ENCODE measurements at regions of chr15 and their contacts with region 1.

Region 1: DNA sequence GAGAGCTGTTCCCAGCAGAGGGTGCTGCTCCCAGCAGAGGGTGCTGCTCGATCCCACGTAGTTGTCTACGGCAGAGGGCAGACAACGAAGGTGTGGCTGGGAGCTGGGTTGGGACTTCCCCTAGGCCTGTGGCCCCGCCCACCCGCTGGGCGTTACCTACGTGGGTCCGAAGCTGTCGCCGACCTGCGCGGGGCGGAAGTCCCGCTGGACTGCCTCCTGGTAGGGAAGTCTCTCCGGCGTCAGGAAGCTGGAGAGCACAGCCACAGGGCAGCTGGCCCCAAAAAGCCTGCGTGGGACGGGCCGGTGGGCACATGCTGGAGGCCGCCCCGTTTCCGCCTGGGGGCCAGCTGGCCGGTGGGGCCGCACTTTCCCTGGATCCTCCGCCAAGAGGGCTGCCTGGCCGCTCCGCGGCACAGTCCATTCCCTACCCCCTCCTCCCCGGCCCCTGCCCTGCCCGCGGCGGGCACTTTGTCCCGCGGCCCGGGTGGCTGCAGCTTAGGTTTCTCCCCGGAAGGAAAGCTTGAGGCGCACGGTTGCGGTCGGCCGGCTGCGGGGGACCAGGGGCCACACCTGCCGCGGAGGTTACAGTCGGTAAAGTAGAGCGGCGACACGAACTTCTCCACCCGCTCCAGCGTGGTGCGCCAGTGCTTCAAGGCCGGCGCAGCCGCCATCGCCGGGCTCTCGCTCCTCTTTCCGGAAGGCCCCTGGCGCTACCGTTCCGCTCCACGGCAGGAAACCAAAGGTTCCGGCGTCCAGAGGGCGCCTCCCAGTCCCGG is at the start of gene MAN2C1:
- DNase-seq: peak; percentile 76 to 97 (median 91)
- ATAC-seq: peak; percentile 97
- H3K4me3 ChIP-seq: peak within 1 kb of the TSS; percentile 86 to 97
- H3K4me3 Mint-ChIP-seq: peak within 1 kb of the TSS; percentile 91
- H3K27ac ChIP-seq: peak within 1 kb of the TSS; percentile 89 to 96
- H3K27ac Mint-ChIP-seq: peak within 1 kb of the TSS; percentile 94
- H3K4me1 ChIP-seq: peaks cover 15% of the 10 kb centered on the region
- H3K4me1 Mint-ChIP-seq: peaks cover 24% of the 10 kb centered on the region
- H3K27me3 ChIP-seq: no peaks in the 10 kb centered on the region
- H3K27me3 Mint-ChIP-seq: no peaks in the 10 kb centered on the region
- CTCF ChIP-seq: no peak
- total RNA-seq, gene MAN2C1: 342 to 373 TPM

Region 2: GRCh38 chr15:73394782-73395181 is 1973.3 kb before region 1 on chr15:
- CTCF ChIA-PET with region 1: no interaction called
- POLR2A ChIA-PET with region 1: no interaction called
- intact Hi-C with region 1: no loop called
- DNase-seq: no peak
- ATAC-seq: no peak
- H3K4me3 ChIP-seq: no peak overlapping the region
- H3K4me3 Mint-ChIP-seq: no peak overlapping the region
- H3K27ac ChIP-seq: no peak overlapping the region
- H3K27ac Mint-ChIP-seq: no peak overlapping the region
- H3K4me1 ChIP-seq: no peaks in the 10 kb centered on the region
- H3K4me1 Mint-ChIP-seq: no peaks in the 10 kb centered on the region
- H3K27me3 ChIP-seq: no peaks in the 10 kb centered on the region
- H3K27me3 Mint-ChIP-seq: peaks cover 27% of the 10 kb centered on the region
- CTCF ChIP-seq: no peak

Region 3: GRCh38 chr15:75023181-75023871 is 344.8 kb before region 1 on chr15 and contains the start of gene PPCDC:
- CTCF ChIA-PET with region 1: no interaction called
- POLR2A ChIA-PET with region 1: interaction called, 5 read pairs
- intact Hi-C with region 1: loop called in 1 of 2 experiments (anchors 5 kb)
- DNase-seq: peak; percentile 81 to 96 (median 93)
- ATAC-seq: peak; percentile 100
- H3K4me3 ChIP-seq: peak within 1 kb of the TSS; percentile 82 to 93
- H3K4me3 Mint-ChIP-seq: peak within 1 kb of the TSS; percentile 92
- H3K27ac ChIP-seq: peak within 1 kb of the TSS; percentile 76 to 77
- H3K27ac Mint-ChIP-seq: peak within 1 kb of the TSS; percentile 92
- H3K4me1 ChIP-seq: peaks cover 8% of the 10 kb centered on the region
- H3K4me1 Mint-ChIP-seq: peaks cover 14% of the 10 kb centered on the region
- H3K27me3 ChIP-seq: no peaks in the 10 kb centered on the region
- H3K27me3 Mint-ChIP-seq: no peaks in the 10 kb centered on the region
- CTCF ChIP-seq: no peak
- total RNA-seq, gene PPCDC: 6.0 to 6.5 TPM

Region 4: GRCh38 chr15:75347222-75347878 is 20.8 kb before region 1 on chr15:
- CTCF ChIA-PET with region 1: interaction called, 8 read pairs
- POLR2A ChIA-PET with region 1: interaction called, 30 read pairs
- intact Hi-C with region 1: loop called (anchors 1 kb)
- DNase-seq: peak; percentile 28 to 80 (median 56)
- ATAC-seq: peak; percentile 57
- H3K4me3 ChIP-seq: peak overlapping the region; percentile 62 to 75
- H3K4me3 Mint-ChIP-seq: peak overlapping the region; percentile 87
- H3K27ac ChIP-seq: peak overlapping the region; percentile 28 to 54
- H3K27ac Mint-ChIP-seq: peak overlapping the region; percentile 86
- H3K4me1 ChIP-seq: peaks cover 41% of the 10 kb centered on the region
- H3K4me1 Mint-ChIP-seq: peaks cover 37% of the 10 kb centered on the region
- H3K27me3 ChIP-seq: no peaks in the 10 kb centered on the region
- H3K27me3 Mint-ChIP-seq: no peaks in the 10 kb centered on the region
- CTCF ChIP-seq: no peak

Region 5: GRCh38 chr15:75389791-75390382 is 21.8 kb after region 1 on chr15:
- CTCF ChIA-PET with region 1: interaction called, 4 read pairs
- POLR2A ChIA-PET with region 1: interaction called, 12 read pairs
- intact Hi-C with region 1: no loop called
- DNase-seq: no peak
- ATAC-seq: no peak
- H3K4me3 ChIP-seq: no peak overlapping the region
- H3K4me3 Mint-ChIP-seq: no peak overlapping the region
- H3K27ac ChIP-seq: no peak overlapping the region
- H3K27ac Mint-ChIP-seq: no peak overlapping the region
- H3K4me1 ChIP-seq: no peaks in the 10 kb centered on the region
- H3K4me1 Mint-ChIP-seq: peaks cover 14% of the 10 kb centered on the region
- H3K27me3 ChIP-seq: no peaks in the 10 kb centered on the region
- H3K27me3 Mint-ChIP-seq: no peaks in the 10 kb centered on the region
- CTCF ChIP-seq: no peak

Region 6: GRCh38 chr15:75639709-75640482 is 271.8 kb after region 1 on chr15 and contains the start of gene IMP3:
- CTCF ChIA-PET with region 1: interaction called, 22 read pairs
- POLR2A ChIA-PET with region 1: interaction called, 70 read pairs
- intact Hi-C with region 1: loop called (anchors 1 kb)
- DNase-seq: peak; percentile 81 to 98 (median 94)
- ATAC-seq: peak; percentile 90
- H3K4me3 ChIP-seq: peak within 1 kb of the TSS; percentile 80 to 99
- H3K4me3 Mint-ChIP-seq: peak within 1 kb of the TSS; percentile 91
- H3K27ac ChIP-seq: peak within 1 kb of the TSS; percentile 79 to 98
- H3K27ac Mint-ChIP-seq: peak within 1 kb of the TSS; percentile 97
- H3K4me1 ChIP-seq: peaks cover 31% of the 10 kb centered on the region
- H3K4me1 Mint-ChIP-seq: peaks cover 41% of the 10 kb centered on the region
- H3K27me3 ChIP-seq: no peaks in the 10 kb centered on the region
- H3K27me3 Mint-ChIP-seq: no peaks in the 10 kb centered on the region
- CTCF ChIP-seq: no peak
- total RNA-seq, gene IMP3: 67.1 to 69.5 TPM

Region 7: GRCh38 chr15:75661091-75661777 is 293.1 kb after region 1 on chr15:
- CTCF ChIA-PET with region 1: no interaction called
- POLR2A ChIA-PET with region 1: no interaction called
- intact Hi-C with region 1: no loop called
- DNase-seq: no peak
- ATAC-seq: no peak
- H3K4me3 ChIP-seq: no peak overlapping the region
- H3K4me3 Mint-ChIP-seq: no peak overlapping the region
- H3K27ac ChIP-seq: no peak overlapping the region
- H3K27ac Mint-ChIP-seq: no peak overlapping the region
- H3K4me1 ChIP-seq: no peaks in the 10 kb centered on the region
- H3K4me1 Mint-ChIP-seq: no peaks in the 10 kb centered on the region
- H3K27me3 ChIP-seq: no peaks in the 10 kb centered on the region
- H3K27me3 Mint-ChIP-seq: no peaks in the 10 kb centered on the region
- CTCF ChIP-seq: no peak

Region 8: DNA sequence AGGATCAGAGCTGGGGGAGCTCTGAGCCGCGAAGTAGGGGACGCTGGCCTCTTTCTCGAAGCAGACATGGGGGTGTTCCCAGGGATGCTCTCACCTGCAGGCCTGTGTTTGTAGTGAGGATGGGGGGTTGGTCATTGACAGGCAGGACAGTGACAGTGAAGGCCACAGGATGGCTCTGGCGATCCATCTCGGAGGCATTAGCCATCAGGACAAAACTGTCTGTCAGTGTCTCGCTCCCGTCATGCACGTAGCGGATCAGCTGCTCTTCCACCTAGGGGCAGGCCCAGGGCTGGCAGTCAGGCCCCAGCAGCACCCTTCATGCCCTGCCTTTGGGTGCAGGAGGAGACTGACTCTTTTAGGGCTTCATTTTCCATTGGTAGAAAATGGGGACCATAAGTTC is 316.5 kb after region 1 on chr15:
- CTCF ChIA-PET with region 1: interaction called, 8 read pairs
- POLR2A ChIA-PET with region 1: no interaction called
- intact Hi-C with region 1: loop called in 1 of 2 experiments (anchors 1 kb)
- DNase-seq: no peak
- ATAC-seq: no peak
- H3K4me3 ChIP-seq: no peak overlapping the region
- H3K4me3 Mint-ChIP-seq: no peak overlapping the region
- H3K27ac ChIP-seq: no peak overlapping the region
- H3K27ac Mint-ChIP-seq: no peak overlapping the region
- H3K4me1 ChIP-seq: no peaks in the 10 kb centered on the region
- H3K4me1 Mint-ChIP-seq: peaks cover 2% of the 10 kb centered on the region
- H3K27me3 ChIP-seq: no peaks in the 10 kb centered on the region
- H3K27me3 Mint-ChIP-seq: no peaks in the 10 kb centered on the region
- CTCF ChIP-seq: no peak